ENCODE measurements at regions of chr1 and their contacts with region 1.

Region 1: DNA sequence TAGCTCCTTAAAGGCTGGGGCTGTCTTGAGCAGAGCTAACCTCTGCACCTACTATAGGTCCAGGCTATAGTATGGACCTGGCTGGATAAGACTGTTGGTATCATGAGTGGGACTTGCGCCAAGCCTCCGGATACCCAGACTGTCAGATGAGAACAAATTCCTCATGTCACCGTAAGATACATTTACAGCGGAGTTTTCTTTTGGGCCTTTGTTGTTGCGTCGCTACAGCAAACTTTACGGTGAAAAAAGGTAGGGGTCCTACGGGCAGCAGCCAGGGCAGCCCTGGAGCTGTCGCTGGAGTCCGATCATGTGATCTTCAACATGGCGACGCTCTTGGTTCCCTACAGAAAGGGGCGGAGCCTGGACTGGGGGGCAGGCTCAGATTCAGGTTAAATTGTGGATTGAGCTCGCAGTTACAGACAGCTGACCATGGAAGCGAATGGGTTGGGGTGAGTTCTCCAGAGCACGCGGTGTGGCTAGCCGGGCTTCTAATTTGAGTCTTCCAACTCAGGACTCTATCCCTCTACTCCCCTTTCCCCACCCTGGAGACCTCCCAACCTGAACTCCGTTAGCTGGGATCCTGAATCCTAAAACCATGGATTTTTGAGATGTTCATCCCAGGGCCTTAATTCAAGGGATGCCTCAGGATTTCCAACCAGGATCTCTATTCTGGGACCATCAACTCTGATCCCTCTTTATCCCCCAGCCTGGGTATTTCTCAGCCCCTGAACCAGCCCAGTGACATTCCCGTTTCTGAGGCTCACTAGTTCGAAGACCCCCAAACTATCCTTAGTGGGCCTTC is at the start of gene UROD:
- DNase-seq: peak; percentile 75
- H3K4me3 ChIP-seq: peak within 1 kb of the TSS; percentile 84
- CTCF ChIP-seq: no peak

Region 2: DNA sequence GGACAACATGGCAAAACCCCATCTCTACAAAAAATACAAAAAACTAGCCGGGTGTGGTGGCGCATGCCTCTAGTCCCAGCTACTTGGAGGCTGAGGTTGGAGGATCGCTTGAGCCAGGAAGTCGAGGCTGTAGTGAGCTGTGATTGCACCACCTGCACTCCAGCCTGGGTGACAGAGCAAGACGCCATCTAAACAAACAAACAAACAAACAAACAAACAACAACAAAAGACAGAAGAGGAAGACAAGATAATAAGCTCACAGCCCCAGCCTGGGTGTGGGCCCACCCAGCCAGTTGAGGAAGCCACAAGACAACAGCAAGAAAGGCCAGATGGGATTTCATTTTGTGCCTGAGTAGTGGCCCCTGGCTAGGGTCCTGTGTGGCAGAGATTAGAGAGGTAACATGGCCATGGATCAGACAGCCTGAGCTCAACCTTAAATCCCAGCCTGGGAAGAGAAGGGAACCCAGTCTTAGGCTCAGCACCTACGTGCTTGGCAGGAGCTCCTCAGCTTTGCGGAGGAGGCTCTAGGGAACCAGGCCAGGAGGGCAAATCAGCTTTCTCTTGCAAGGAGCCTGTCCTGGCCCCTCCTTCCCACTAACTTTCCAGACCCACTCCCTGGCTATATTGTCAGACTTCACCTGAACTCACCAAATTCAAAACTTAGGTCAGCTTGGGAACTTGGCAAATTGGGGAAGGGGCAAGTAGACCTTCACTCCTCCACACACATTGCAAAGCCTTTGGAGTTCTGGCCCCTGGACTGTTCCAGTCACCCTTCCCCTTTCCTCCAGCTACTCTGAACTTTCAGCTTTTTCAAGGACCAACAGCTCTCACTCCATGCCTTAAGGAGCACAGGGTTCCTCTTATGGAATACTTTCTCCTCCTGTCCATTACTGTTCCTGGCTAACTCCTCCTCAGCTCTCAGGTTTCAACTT is 219.0 kb before region 1 on chr1:
- CTCF ChIA-PET with region 1: interaction called, 12 read pairs
- POLR2A ChIA-PET with region 1: no interaction called
- DNase-seq: no peak
- H3K4me3 ChIP-seq: no peak overlapping the region
- CTCF ChIP-seq: no peak

Region 3: GRCh38 chr1:44819608-44820327 is 192.3 kb before region 1 on chr1:
- CTCF ChIA-PET with region 1: interaction called, 3 read pairs
- POLR2A ChIA-PET with region 1: interaction called, 17 read pairs
- DNase-seq: peak; percentile 83
- H3K4me3 ChIP-seq: peak overlapping the region; percentile 59
- CTCF ChIP-seq: no peak

Region 4: GRCh38 chr1:44964396-44964795 is 47.6 kb before region 1 on chr1:
- CTCF ChIA-PET with region 1: no interaction called
- POLR2A ChIA-PET with region 1: no interaction called
- DNase-seq: no peak
- H3K4me3 ChIP-seq: no peak overlapping the region
- CTCF ChIP-seq: no peak

Region 5: DNA sequence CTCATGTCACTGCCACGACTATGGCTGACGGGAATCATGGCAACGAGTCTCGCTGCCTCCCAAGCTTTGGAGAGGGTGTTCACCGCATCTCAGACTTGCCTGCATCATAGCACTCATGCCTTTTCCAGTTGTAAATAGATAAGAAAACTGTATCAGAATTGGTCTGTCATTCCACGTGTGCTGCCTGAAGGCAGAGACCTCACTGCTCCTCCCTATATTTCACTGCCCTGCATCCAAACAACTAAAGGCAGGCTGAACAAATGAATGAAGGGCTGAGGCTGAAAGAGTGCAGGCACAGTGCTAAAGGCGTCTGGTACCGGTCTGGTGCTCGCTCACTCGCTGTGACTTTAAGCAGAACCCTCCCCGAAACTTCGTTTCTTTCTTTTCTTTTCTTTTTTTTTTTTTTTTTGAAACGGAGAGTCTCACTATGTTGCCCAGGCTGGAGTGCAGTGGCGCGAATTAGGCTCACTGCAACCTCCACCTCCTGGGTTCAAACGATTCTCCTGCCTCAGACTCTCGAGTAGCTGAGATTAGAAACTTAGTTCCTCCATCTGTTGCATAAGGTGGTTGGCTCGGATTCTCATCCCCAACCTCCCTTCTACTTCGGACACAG is 26.2 kb before region 1 on chr1:
- CTCF ChIA-PET with region 1: interaction called, 9 read pairs
- POLR2A ChIA-PET with region 1: interaction called, 24 read pairs
- DNase-seq: no peak
- H3K4me3 ChIP-seq: peak overlapping the region; percentile 99
- CTCF ChIP-seq: no peak

Region 6: DNA sequence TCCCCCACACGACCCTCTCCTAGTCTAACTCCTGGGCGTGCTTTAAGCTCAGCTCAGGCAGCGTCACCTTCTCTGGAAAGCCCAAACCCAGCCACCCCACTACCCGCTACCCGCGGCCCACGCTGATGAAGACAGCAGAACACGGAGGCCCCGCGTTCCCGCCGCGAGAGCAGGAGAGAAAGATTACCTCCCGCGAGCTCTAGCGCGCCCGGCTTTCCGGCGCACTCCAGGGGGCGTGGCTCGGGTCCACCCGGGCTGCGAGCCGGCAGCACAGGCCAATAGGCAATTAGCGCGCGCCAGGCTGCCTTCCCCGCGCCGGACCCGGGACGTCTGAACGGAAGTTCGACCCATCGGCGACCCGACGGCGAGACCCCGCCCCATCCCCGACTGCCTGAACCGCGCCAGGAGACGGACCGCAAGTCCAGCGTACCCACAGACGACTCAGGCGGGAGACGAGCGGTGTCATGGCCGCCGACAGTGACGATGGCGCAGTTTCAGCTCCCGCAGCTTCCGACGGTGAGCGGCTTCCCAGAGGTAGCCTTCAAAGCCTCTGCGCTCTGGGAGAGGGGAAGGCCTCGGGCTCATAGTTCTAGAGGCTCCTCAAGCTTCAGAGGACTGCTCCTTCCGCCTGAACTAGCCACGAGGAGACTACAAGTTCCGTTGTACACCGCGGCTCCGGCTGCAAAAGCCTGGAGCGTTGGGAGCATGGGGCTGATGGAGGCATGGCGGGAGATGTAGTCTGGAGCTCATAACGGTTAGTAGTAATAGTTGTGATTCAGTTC is 327.9 kb after region 1 on chr1 and contains the starts of genes MUTYH and TOE1:
- CTCF ChIA-PET with region 1: interaction called, 78 read pairs
- POLR2A ChIA-PET with region 1: interaction called, 12 read pairs
- DNase-seq: peak; percentile 36
- H3K4me3 ChIP-seq: peak within 1 kb of the TSS; percentile 97
- CTCF ChIP-seq: no peak

Region 7: DNA sequence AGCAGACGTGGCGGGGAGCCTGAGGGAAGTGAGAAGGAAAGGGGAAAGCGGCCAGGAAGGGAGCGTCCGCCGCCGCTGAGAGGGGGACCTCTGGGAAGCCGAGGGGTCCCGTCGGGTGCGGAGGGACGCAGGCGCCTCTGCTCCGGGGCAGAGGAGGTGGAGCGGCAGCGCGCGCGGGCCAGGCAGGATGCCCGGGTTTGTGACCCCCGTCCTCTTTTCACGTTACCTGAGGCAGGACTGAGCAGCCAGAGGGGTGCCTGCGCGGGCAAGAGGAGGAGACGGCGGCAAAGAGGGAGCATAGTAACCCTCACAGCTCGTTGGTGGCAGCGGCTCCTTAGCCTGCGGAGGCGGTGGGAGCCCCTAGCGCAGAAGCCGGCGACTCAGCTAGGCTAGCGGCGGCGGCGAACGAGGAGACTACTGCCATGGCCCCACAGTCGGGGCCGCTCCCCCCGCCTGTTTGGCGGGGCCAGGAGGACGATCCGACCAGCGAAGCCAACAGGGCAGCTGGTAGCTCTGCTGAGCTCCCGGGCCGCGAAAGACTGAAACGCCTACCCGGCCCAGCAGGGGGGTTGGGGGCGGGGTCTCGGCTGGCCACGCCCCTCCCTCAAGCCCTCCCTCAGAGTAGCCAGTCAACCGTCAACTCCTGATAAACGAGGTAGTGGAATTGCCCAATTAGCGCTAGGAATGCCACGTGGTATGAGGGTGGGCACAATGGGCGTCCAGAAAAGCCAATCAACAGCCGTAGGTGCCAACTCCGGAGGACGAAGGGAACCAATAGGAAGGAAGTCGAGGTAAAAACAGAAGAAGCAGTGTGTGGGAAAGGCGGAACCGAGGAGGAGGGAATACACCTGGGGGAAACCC is 478.8 kb after region 1 on chr1 and contains the start of gene TESK2:
- CTCF ChIA-PET with region 1: interaction called, 184 read pairs
- POLR2A ChIA-PET with region 1: interaction called, 4 read pairs
- DNase-seq: peak; percentile 94
- H3K4me3 ChIP-seq: peak within 1 kb of the TSS; percentile 91
- CTCF ChIP-seq: peak; percentile 16